IMR-90 (cell line): ENCODE measurements at regions of chr5 and their contacts with region 1.

Region 1: DNA sequence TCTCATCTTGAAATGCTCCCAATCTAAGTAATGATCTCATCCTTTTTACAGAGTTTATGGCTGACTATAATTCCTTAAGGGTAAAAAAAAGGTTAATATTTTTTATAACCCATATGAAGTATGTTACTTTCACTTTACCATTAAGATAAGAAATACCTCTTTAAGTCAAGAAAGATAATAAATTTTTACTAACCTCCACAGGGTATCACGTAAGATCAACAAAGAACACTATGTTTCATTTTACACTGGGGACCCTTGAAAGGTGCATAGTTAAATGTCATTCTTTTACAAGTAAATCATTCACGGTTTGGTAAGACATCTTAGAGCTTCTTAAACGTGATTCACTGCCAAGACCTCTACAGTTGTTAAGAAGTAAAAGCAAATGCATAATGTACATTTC is 472.7 kb upstream of the CDH9 start:
- DNase-seq: no peak
- ATAC-seq: no peak
- H3K4me3 ChIP-seq: no peak overlapping the region
- H3K27ac ChIP-seq: no peak overlapping the region
- H3K4me1 ChIP-seq: no peaks in the 10 kb centered on the region
- H3K27me3 ChIP-seq: no peaks in the 10 kb centered on the region
- CTCF ChIP-seq: no peak
- POLR2A ChIP-seq: no peak
- RAD21 ChIP-seq: no peak

Region 2: DNA sequence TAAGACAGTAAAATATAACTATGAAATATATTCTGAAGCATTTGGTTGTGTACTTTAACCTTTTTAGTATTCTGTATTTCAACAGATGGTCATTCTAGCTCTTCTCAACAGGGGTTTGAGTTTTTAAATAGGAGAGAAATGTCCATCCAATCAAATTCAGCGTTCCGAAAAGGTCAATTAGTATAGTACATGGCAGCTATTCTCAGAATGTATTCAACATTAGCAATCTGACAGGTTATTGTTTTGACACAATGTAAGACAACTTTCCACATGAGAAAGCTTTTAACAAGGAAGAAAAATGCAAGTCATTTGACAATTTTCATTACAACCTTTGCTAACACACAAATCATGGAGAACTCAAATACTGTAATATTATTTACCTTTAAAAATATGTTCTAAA is 1869.9 kb before region 1 on chr5:
- CTCF ChIA-PET with region 1: no interaction called
- POLR2A ChIA-PET with region 1: interaction called, 18 read pairs
- dilution Hi-C with region 1: no loop called
- in situ Hi-C with region 1: no loop called
- intact Hi-C with region 1: no loop called
- DNase-seq: no peak
- ATAC-seq: no peak
- H3K4me3 ChIP-seq: no peak overlapping the region
- H3K27ac ChIP-seq: no peak overlapping the region
- H3K4me1 ChIP-seq: no peaks in the 10 kb centered on the region
- H3K27me3 ChIP-seq: no peaks in the 10 kb centered on the region
- CTCF ChIP-seq: no peak
- POLR2A ChIP-seq: no peak
- RAD21 ChIP-seq: no peak